Activated CD4-positive, alpha-beta T cell treated with anti-CD3 and anti-CD28 coated beads for 36 hours (primary cell): ENCODE measurements at regions of chr12 and their contacts with region 1.

Region 1: GRCh38 chr12:68745904-68746571 is at the start of gene SLC35E3:
- DNase-seq: peak; percentile 96
- ATAC-seq: peak; percentile 97
- H3K4me3 Mint-ChIP-seq: peak within 1 kb of the TSS; percentile 87
- H3K27ac Mint-ChIP-seq: peak within 1 kb of the TSS; percentile 92
- H3K4me1 Mint-ChIP-seq: peaks cover 16% of the 10 kb centered on the region
- H3K27me3 Mint-ChIP-seq: no peaks in the 10 kb centered on the region
- total RNA-seq, gene SLC35E3: 3.5 to 5.1 TPM

Region 2: DNA sequence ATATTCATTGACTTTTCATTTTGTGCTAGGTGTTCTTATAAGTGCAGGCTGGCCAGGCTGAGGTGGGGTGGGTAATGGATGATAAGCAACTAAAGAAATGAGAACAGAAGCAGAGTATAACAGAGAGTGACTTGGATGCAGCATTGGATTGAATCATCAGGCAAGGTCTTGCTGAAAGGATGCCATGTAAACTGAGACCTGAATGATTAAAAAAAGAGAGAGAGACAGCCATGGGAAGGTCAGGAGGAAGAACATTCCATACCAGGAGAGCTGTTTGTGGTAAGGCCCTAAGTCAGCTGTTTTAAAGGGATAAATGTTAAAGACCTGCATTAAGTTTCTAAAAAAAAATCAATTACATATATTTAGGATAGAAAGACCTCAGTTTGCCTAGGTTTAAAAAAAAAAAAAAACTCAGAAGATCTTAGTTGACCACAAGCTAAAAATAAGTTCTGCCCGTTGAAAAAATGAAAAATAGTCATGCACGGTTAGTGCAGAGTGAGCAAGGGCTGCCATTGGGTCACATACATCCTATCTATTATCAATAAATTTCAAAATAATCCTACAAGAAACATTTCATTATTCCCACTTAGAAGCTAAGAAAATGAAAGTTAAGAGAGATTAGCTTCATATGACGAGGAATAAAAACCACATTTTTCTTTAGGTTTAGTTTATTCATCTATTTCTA is 623.7 kb before region 1 on chr12:
- CTCF ChIA-PET with region 1: no interaction called
- POLR2A ChIA-PET with region 1: no interaction called
- intact Hi-C with region 1: no loop called
- DNase-seq: no peak
- ATAC-seq: no peak
- H3K4me3 Mint-ChIP-seq: no peak overlapping the region
- H3K27ac Mint-ChIP-seq: no peak overlapping the region
- H3K4me1 Mint-ChIP-seq: peaks cover 17% of the 10 kb centered on the region
- H3K27me3 Mint-ChIP-seq: no peaks in the 10 kb centered on the region

Region 3: GRCh38 chr12:68331869-68332727 is 413.9 kb before region 1 on chr12 and contains the start of gene MDM1:
- CTCF ChIA-PET with region 1: no interaction called
- POLR2A ChIA-PET with region 1: no interaction called
- intact Hi-C with region 1: loop called in 1 of 2 experiments (anchors 1 kb)
- DNase-seq: peak; percentile 97
- ATAC-seq: peak; percentile 98
- H3K4me3 Mint-ChIP-seq: peak within 1 kb of the TSS; percentile 80
- H3K27ac Mint-ChIP-seq: peak within 1 kb of the TSS; percentile 55
- H3K4me1 Mint-ChIP-seq: peaks cover 42% of the 10 kb centered on the region
- H3K27me3 Mint-ChIP-seq: peaks cover 2% of the 10 kb centered on the region
- total RNA-seq, gene MDM1: 12.7 to 13.6 TPM

Region 4: DNA sequence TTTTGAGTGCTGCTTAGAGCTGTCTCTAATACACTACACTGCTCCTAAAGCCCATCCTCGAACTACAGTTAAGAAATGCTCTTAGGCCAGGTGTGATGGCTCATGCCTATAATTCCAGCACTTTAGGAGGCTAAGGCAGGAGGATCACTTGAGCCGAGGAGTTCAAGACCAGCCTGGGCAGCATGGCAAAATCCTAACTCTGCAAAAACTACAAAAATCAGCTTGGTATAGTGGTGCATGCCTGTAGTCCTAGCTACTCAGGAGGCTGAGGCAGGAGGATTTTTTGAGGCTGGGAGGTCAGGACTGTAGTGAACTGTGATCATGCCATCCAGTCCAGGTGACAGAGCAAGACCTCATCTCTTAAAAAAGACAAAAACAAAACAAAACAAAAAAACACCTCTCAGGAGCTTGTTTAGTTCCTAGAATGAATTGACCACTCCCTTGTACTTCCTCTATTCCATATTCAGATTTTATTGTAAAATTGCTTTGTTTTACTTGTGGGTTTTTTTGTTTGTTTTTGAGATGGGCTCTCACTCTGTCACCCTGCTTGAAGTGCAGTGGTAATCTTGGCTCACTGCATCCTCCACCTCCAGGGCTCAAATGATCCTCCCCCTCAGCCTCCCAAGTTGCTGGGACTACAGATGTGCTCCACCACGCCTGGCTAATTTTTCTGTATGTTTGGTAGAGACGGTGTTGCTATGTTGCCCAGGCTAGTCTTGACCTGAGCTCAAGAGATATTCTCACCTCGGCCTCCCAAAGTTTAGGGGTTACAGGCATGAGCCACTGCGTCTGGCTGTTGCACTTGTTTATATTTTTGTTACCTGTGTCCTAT is 75.5 kb after region 1 on chr12:
- CTCF ChIA-PET with region 1: no interaction called
- POLR2A ChIA-PET with region 1: no interaction called
- intact Hi-C with region 1: loop called in 1 of 2 experiments (anchors 5 kb)
- DNase-seq: no peak
- ATAC-seq: peak; percentile 42
- H3K4me3 Mint-ChIP-seq: no peak overlapping the region
- H3K27ac Mint-ChIP-seq: peak overlapping the region; percentile 55
- H3K4me1 Mint-ChIP-seq: peaks cover 22% of the 10 kb centered on the region
- H3K27me3 Mint-ChIP-seq: no peaks in the 10 kb centered on the region

Region 5: DNA sequence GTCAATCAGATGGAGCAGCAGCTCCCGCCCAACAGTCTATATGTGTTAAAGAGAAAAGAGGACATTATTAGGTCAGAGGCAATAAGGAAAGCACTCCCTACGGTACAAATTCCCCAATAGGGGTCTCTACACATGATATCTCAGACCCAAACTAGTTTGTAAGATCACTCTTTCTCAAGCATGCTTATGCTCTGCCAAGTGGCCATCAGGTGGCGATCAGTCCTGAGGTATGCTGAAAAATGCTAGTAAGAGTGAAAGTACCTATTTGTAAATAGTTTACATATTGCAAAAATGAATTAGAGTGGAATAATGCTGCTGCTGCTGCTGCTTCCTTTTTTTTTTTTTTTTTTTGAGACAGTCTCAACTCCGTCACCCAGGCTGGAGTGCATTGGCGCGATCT is 125.9 kb after region 1 on chr12:
- CTCF ChIA-PET with region 1: no interaction called
- POLR2A ChIA-PET with region 1: no interaction called
- intact Hi-C with region 1: no loop called
- DNase-seq: peak; percentile 55
- ATAC-seq: peak; percentile 42
- H3K4me3 Mint-ChIP-seq: no peak overlapping the region
- H3K27ac Mint-ChIP-seq: no peak overlapping the region
- H3K4me1 Mint-ChIP-seq: no peaks in the 10 kb centered on the region
- H3K27me3 Mint-ChIP-seq: peaks cover 2% of the 10 kb centered on the region